Activated B cell treated with CpG ODN at 0.5 μM for 24 hours (primary cell): ENCODE measurements at regions of chr2 and their contacts with region 1.

Region 1: GRCh38 chr2:241355983-241356870 is at the start of gene FARP2:
- DNase-seq: peak; percentile 94
- ATAC-seq: peak; percentile 89
- H3K4me3 Mint-ChIP-seq: peak within 1 kb of the TSS; percentile 87
- H3K27ac Mint-ChIP-seq: peak within 1 kb of the TSS; percentile 88
- H3K4me1 Mint-ChIP-seq: peaks cover 49% of the 10 kb centered on the region
- H3K27me3 Mint-ChIP-seq: no peaks in the 10 kb centered on the region
- CTCF ChIP-seq: no peak
- total RNA-seq, gene FARP2: 74.7 and 91.2 TPM in 2 replicates

Region 2: GRCh38 chr2:240832205-240832727 is 524.0 kb before region 1 on chr2:
- CTCF ChIA-PET with region 1: no interaction called
- POLR2A ChIA-PET with region 1: no interaction called
- intact Hi-C with region 1: loop called (anchors 5 kb)
- DNase-seq: peak; percentile 89
- ATAC-seq: peak; percentile 94
- H3K4me3 Mint-ChIP-seq: peak overlapping the region; percentile 55
- H3K27ac Mint-ChIP-seq: no peak overlapping the region
- H3K4me1 Mint-ChIP-seq: peaks cover 5% of the 10 kb centered on the region
- H3K27me3 Mint-ChIP-seq: peaks cover 18% of the 10 kb centered on the region
- CTCF ChIP-seq: no peak

Region 3: DNA sequence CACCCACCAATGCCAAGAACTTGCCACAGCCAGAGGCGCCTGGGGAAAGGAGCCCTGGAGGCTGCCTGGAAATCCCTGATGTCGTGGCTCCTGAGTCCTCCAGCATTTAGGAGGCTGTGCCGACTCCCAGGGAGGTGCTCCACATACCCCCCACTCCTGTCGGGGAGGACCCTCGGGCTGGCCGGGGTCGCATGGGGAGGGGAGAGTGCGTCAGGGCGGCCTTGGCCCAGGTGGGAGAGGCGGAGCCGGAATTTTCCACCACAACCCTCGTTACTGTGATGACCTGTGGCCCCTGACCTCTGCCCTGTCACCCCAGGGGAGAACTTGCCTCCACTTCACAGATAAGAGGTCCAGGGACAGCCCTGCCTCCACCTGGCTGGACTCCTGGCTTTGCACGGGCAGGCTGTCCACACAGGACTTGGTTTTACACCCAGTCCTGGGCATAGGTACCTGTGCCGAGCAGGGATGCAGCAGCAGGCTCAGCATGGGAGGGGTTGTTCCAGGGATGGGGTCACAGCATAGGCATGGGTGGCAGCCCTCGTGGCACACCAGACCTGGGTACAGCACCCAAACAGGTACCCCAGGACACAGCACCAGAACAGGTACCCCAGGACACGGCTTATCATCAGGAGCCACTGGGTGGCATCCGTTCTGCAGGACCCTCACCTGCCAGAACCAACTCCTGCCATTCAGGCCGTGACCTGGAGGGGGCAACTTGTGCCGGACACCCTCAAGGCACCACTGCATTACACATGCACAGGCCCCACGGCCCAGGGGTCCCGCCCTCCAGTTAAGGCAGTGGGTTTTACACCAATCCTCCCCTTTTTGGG is 499.9 kb before region 1 on chr2:
- CTCF ChIA-PET with region 1: no interaction called
- POLR2A ChIA-PET with region 1: no interaction called
- intact Hi-C with region 1: no loop called
- DNase-seq: no peak
- ATAC-seq: no peak
- H3K4me3 Mint-ChIP-seq: no peak overlapping the region
- H3K27ac Mint-ChIP-seq: no peak overlapping the region
- H3K4me1 Mint-ChIP-seq: no peaks in the 10 kb centered on the region
- H3K27me3 Mint-ChIP-seq: peaks cover 8% of the 10 kb centered on the region
- CTCF ChIP-seq: no peak

Region 4: GRCh38 chr2:241271641-241272297 is 84.5 kb before region 1 on chr2:
- CTCF ChIA-PET with region 1: no interaction called
- POLR2A ChIA-PET with region 1: no interaction called
- intact Hi-C with region 1: loop called (anchors 5 kb)
- DNase-seq: peak; percentile 52
- ATAC-seq: peak; percentile 70
- H3K4me3 Mint-ChIP-seq: peak overlapping the region; percentile 94
- H3K27ac Mint-ChIP-seq: peak overlapping the region; percentile 89
- H3K4me1 Mint-ChIP-seq: peaks cover 36% of the 10 kb centered on the region
- H3K27me3 Mint-ChIP-seq: no peaks in the 10 kb centered on the region
- CTCF ChIP-seq: no peak

Region 5: DNA sequence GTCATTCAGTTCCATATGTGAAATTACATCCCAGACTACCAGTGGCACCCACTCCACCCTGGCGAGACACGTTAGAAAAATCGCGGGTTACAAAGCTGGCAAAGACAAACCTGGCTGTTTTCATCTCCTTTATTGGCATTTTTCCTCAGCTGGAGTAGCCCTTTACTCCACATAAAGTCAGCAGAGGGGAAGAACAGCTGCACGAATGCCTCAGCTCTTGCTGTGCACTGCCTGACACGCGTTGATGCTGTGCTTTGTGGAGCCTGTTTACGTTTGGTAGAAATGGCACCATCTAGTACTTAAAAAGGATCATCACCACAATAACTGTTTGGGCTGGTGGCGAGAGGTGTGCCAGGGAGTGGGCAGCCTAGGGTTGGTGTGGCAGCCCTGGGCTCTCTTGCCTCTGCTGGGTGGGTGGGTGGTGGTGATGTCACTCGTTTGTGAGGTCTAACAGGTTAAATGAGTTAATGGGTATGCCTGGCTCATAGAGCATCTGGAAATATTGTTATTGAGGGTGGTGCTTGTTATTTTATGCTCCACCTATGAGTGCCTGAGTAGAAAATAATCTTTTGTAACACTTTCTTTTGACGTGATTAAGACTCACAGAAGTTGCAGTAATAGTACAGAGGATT is 16.2 kb after region 1 on chr2:
- CTCF ChIA-PET with region 1: interaction called, 9 read pairs
- POLR2A ChIA-PET with region 1: interaction called, 33 read pairs
- intact Hi-C with region 1: loop called (anchors 1 kb)
- DNase-seq: no peak
- ATAC-seq: no peak
- H3K4me3 Mint-ChIP-seq: no peak overlapping the region
- H3K27ac Mint-ChIP-seq: peak overlapping the region; percentile 46
- H3K4me1 Mint-ChIP-seq: peaks cover 68% of the 10 kb centered on the region
- H3K27me3 Mint-ChIP-seq: no peaks in the 10 kb centered on the region
- CTCF ChIP-seq: no peak

Region 6: GRCh38 chr2:241443486-241444223 is 87.4 kb after region 1 on chr2:
- CTCF ChIA-PET with region 1: no interaction called
- POLR2A ChIA-PET with region 1: interaction called, 3 read pairs
- intact Hi-C with region 1: loop called (anchors 5 kb)
- DNase-seq: peak; percentile 48
- ATAC-seq: peak; percentile 76
- H3K4me3 Mint-ChIP-seq: peak overlapping the region; percentile 12
- H3K27ac Mint-ChIP-seq: no peak overlapping the region
- H3K4me1 Mint-ChIP-seq: peaks cover 18% of the 10 kb centered on the region
- H3K27me3 Mint-ChIP-seq: peaks cover 2% of the 10 kb centered on the region
- CTCF ChIP-seq: no peak

Region 7: DNA sequence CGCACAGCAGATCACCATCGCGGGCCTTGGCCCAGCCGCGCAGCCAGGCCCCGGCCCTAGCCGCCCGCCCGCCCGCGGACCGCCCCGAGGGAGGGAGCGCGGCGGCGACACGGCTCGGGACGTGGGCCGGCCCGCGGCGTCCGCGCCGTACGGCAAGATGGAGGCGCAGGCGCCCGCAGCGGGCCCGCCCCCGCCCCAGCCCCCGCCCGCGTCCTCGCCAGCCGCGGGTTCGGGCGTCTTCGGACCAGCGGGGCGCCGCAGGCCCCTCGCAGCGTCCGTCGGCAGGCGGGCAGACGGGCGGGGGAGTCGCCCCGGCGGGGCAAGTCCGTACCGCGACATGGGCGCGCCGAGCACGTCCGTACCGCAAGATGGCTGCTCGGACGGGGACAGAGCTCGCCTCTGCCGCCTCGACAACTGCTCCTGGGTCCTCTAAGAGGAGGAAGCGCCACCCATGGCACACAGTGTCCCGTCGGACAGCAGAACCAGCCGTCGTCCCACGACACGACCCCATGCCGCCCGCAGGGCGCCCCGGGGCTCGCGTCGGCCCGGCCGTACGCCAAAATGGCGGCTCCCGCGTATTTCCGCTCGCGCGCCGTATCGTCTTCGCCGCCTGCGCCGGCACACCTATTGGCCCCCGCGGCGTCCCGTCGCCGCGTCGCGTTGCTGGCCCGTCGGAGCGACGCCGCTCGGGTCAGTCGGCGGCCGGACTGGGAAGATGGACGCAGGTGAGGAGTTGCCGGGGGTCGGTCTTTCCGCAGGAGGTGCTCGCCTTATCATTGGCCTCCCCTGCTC is 281.0 kb after region 1 on chr2 and contains the starts of genes ATG4B and THAP4:
- CTCF ChIA-PET with region 1: no interaction called
- POLR2A ChIA-PET with region 1: no interaction called
- intact Hi-C with region 1: loop called (anchors 1 kb)
- DNase-seq: peak; percentile 84
- ATAC-seq: peak; percentile 72
- H3K4me3 Mint-ChIP-seq: peak within 1 kb of the TSS; percentile 91
- H3K27ac Mint-ChIP-seq: peak within 1 kb of the TSS; percentile 83
- H3K4me1 Mint-ChIP-seq: peaks cover 45% of the 10 kb centered on the region
- H3K27me3 Mint-ChIP-seq: no peaks in the 10 kb centered on the region
- CTCF ChIP-seq: no peak
- total RNA-seq, gene ATG4B: 92.6 and 101 TPM in 2 replicates
- total RNA-seq, gene THAP4: 23.7 and 26.7 TPM in 2 replicates